Activated CD4-positive, alpha-beta memory T cell treated with anti-CD3 and anti-CD28 coated beads for 36 hours (primary cell): ENCODE measurements at regions of chr16 and their contacts with region 1.

Region 1: GRCh38 chr16:58578642-58579041 is 51.0 kb downstream of the CNOT1 start:
- DNase-seq: no peak
- H3K4me3 Mint-ChIP-seq: no peak overlapping the region
- H3K27ac Mint-ChIP-seq: no peak overlapping the region
- H3K4me1 Mint-ChIP-seq: peaks cover 4% of the 10 kb centered on the region
- H3K27me3 Mint-ChIP-seq: no peaks in the 10 kb centered on the region

Region 2: DNA sequence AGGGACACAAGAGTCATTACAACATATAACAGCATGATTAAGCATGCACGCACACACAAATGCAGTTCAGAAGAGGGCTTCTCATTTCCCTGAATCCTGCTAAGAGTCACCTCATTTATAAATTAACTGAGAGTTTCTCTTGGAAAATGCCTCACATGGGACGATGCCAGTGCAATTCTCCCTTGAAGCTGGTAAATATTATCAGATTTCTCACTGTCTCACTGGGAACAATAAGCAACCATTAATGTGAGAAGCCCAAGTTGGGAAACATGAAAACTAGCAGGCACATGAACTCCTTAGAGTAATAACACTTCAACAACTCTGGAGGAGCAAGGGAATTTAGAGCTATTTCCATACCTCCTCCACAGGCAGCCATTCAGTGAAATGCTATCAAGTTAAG is 36.9 kb before region 1 on chr16:
- CTCF ChIA-PET with region 1: no interaction called
- POLR2A ChIA-PET with region 1: no interaction called
- intact Hi-C with region 1: loop called (anchors 5 kb)
- DNase-seq: no peak
- H3K4me3 Mint-ChIP-seq: no peak overlapping the region
- H3K27ac Mint-ChIP-seq: no peak overlapping the region
- H3K4me1 Mint-ChIP-seq: no peaks in the 10 kb centered on the region
- H3K27me3 Mint-ChIP-seq: no peaks in the 10 kb centered on the region